Gastrocnemius medialis (tissue), 4 donors: ENCODE measurements at regions of chr2 and their contacts with region 1.

Region 1: DNA sequence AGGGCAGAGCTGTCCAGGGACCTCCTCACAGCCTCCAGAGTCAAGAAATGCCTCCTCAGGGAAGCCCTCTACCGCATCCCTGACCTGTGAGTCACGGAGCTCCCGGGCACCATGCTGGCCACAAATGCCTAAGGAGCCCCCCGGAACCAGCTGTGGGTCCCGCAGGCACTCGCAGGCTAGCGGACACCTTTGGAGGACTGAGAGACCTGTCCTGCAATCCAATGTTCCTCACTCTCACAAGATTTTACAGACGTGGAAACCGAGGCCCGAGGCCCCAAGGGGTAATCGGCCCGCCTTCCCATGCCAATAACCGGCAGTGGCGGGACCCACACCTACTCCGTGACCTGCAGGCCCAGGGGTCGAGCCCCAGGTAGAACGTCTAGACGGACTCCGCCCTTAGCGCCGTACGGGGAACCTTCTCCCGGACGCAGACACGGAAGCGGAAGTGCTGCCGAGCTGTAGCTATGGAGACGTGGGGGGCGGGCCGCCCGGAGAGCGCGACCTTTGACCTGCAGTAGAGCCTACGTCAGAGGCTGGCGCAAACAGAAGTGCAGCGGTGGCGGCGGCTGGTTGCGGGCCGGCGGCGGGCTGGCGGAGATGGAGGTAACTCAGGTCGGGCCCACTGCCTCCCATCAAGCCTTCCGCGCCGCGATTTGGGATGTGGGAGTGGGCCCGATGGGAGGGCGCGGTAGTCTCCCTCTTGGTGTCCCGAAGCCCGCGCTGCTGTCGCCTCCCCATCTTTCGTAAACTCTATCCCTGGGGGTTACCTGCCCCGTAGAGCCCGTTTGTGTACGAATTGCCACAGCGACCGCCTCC is at the start of gene GCC2:
- DNase-seq: peak; percentile 86 to 93
- ATAC-seq: peak; percentile 98 to 100
- H3K4me3 ChIP-seq: peak within 1 kb of the TSS; percentile 73 to 100 (median 85)
- H3K27ac ChIP-seq: peak within 1 kb of the TSS; percentile 79 to 90 (median 84)
- H3K4me1 ChIP-seq: peaks cover 13 to 14% of the 10 kb centered on the region in 2 donors
- H3K27me3 ChIP-seq: no peaks in the 10 kb centered on the region
- CTCF ChIP-seq: no peak
- POLR2A ChIP-seq: peak; percentile 71 to 74
- total RNA-seq, gene GCC2: 16.7 to 43.1 (median 19.3) TPM

Region 2: DNA sequence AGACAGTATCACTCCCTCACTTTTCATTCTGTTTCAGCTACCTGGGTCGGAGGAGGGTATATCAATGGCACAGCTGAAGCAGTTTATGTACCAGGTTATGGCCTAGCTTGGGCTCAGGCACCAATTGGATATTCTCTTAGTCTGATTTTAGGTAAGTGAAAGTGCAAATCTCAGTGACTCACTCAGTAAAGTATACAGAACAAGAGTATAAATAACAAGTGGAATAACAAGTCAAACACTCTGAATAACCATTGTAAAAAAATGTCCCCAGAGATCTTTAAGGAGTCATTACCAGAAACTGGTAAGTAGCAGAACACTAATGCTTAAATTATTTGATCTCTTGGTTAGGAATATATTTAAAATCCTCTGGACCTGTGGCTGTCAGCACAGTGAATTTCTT is 456.8 kb before region 1 on chr2:
- in situ Hi-C with region 1: no loop called
- intact Hi-C with region 1: no loop called
- DNase-seq: no peak
- ATAC-seq: no peak
- H3K4me3 ChIP-seq: no peak overlapping the region
- H3K27ac ChIP-seq: no peak overlapping the region
- H3K4me1 ChIP-seq: no peaks in the 10 kb centered on the region
- H3K27me3 ChIP-seq: peaks cover 0 to 12% (median 0%) of the 10 kb centered on the region in 3 donors
- CTCF ChIP-seq: no peak
- POLR2A ChIP-seq: no peak

Region 3: GRCh38 chr2:108304975-108305374 is 143.9 kb before region 1 on chr2:
- in situ Hi-C with region 1: no loop called
- intact Hi-C with region 1: no loop called
- DNase-seq: no peak
- ATAC-seq: no peak
- H3K4me3 ChIP-seq: no peak overlapping the region
- H3K27ac ChIP-seq: no peak overlapping the region
- H3K4me1 ChIP-seq: no peaks in the 10 kb centered on the region
- H3K27me3 ChIP-seq: no peaks in the 10 kb centered on the region
- CTCF ChIP-seq: no peak
- POLR2A ChIP-seq: no peak

Region 4: GRCh38 chr2:108370060-108370459 is 78.8 kb before region 1 on chr2:
- in situ Hi-C with region 1: no loop called
- intact Hi-C with region 1: no loop called
- DNase-seq: no peak
- ATAC-seq: no peak
- H3K4me3 ChIP-seq: no peak overlapping the region
- H3K27ac ChIP-seq: no peak overlapping the region
- H3K4me1 ChIP-seq: no peaks in the 10 kb centered on the region
- H3K27me3 ChIP-seq: no peaks in the 10 kb centered on the region
- CTCF ChIP-seq: no peak
- POLR2A ChIP-seq: no peak

Region 5: DNA sequence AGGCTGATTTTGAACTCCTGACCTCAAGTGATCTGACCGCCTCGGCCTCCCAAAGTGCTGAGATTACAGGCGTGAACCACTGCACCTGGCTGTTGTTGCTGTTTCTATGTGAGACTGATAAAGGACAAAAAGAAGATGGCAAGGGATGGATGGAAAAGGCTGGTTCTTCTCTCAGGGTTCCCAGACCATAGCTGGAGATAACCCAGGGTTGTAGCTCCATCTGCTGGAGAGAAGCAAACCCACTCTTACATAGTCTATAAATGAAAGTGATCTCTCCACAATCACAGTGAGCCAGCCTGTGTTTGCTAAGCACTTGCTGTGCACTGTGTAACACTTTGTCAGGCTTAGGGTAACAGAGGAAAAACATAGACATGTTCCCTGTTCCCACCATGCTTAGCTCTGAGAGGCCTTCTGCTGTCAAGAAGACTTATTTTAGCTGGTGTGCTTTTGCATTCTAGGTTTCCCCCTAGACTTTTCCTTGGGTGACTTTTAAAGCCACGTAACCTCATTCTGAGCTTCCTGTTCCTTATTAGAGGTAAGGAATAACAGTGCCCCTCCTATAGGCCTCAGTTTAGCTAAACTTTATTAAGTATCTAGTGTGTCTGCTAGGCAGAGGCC is 135.1 kb after region 1 on chr2:
- in situ Hi-C with region 1: loop called in 1 of 4 experiments (anchors 25 kb)
- intact Hi-C with region 1: loop called (anchors 2 kb)
- DNase-seq: peak; percentile 52 to 71
- ATAC-seq: peak; percentile 77 to 85
- H3K4me3 ChIP-seq: no peak overlapping the region
- H3K27ac ChIP-seq: peak overlapping the region; percentile 30 to 79 (median 64)
- H3K4me1 ChIP-seq: peaks cover 56 to 57% of the 10 kb centered on the region in 2 donors
- H3K27me3 ChIP-seq: no peaks in the 10 kb centered on the region
- CTCF ChIP-seq: peak; percentile 70 to 82 (median 78)
- POLR2A ChIP-seq: no peak

Region 6: DNA sequence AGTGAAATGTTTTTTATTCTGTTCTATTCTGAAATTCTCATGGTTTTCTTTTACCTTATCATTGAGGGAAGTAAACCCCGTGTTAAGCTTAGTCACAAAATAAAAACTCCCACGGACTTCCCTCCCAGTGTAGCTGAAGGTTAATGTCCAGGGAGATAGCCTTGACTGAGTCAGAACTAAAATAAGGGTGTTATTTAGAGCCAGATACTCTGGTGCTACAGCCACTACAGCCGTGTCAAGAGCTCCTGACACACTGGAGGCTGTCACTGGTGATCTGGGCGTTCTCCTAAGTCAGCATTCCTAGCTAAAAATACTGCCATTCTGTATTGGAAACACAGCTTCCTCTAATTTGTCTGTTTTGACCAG is 188.4 kb after region 1 on chr2:
- in situ Hi-C with region 1: no loop called
- intact Hi-C with region 1: loop called (anchors 2 kb)
- DNase-seq: peak; percentile 87 to 88
- ATAC-seq: peak; percentile 84
- H3K4me3 ChIP-seq: no peak overlapping the region
- H3K27ac ChIP-seq: peak overlapping the region; percentile 86 to 95 (median 92)
- H3K4me1 ChIP-seq: peaks cover 74 to 88% of the 10 kb centered on the region in 2 donors
- H3K27me3 ChIP-seq: no peaks in the 10 kb centered on the region
- CTCF ChIP-seq: no peak
- POLR2A ChIP-seq: peak; percentile 43 to 69

Region 7: DNA sequence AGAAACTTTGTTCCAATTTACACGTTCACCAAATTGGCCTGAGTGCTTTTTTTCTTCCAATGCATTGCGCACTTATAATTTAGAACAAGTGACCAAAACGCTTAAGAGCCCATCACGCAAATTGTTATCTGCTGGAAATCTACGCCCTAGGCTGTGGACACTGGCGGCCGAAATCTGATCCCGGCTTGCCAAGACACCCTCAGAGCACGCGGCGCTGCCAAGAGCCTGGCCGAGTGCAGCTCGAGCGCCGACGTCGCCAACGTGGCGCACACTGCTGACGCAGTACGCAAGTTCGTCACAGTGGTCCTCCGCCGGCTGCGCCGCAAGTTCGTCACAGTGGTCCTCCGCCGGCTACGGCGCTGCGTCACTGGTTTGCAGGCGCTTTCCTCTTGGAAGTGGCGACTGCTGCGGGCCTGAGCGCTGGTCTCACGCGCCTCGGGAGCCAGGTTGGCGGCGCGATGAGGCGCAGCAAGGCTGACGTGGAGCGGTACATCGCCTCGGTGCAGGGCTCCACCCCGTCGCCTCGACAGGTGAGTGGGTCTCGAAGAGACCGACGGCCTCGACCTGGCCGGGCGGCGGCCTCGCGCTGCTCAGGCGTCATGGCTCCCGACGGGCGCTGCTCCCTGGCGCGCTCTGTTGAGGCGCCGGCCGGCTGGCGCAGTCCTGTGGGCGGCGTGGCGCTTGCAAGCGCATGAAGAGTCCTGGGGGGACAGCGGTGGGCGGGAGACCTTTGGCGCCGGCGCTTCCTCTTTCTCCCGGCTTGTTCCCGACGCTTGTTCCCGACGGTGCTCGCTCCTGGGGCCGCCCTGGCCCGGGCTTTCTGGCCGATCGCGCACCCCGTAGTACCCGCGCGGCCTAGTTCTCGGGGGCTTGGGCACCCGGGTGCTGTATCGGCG is 270.5 kb after region 1 on chr2 and contains the start of gene RANBP2:
- in situ Hi-C with region 1: no loop called
- intact Hi-C with region 1: loop called (anchors 2 kb)
- DNase-seq: peak; percentile 94 to 95
- ATAC-seq: peak; percentile 97 to 98
- H3K4me3 ChIP-seq: peak within 1 kb of the TSS; percentile 73 to 86 (median 85)
- H3K27ac ChIP-seq: peak within 1 kb of the TSS; percentile 91 to 99 (median 96)
- H3K4me1 ChIP-seq: peaks cover 15 to 18% of the 10 kb centered on the region in 2 donors
- H3K27me3 ChIP-seq: no peaks in the 10 kb centered on the region
- CTCF ChIP-seq: no peak
- POLR2A ChIP-seq: peak; percentile 96 to 97
- total RNA-seq, gene RANBP2: 66.6 to 82.0 (median 76.7) TPM